GM10248 (cell line): ENCODE measurements at regions of chr3 and their contacts with region 1.

Region 1: DNA sequence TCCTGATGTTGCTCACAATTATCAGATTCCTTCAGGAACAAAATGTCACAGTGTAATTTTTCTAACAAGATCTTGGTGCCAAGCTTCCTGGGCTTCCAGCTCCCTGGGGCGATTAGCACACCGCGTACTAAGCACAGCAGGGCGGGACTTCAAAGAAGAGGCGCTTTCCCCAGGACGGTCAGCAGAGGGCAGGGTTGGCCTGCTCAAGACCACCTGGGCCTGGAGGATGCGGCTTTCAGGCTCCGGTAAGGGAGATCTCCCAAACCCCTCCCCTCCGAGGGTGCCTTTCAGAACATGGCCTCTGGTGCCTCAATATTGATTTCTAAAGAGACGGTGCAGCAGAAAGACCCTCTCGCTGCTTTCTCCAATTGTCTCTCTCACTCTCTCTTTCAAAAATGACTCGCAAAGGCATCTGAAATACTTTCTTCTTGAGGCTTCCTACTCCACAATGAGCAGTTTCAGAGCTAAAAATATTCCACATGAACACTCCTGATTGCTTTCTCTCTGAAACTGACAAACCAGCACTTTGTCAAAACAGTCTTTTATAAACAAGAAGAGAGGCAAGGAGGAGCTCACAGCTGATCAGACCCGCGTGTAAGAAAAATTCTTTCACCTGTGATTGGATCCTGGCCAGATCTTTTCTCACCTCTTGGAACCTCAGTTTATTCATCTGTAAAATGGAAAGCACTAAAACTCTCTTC is 154.0 kb downstream of the ADAMTS9 start:
- DNase-seq: peak; percentile 62
- CTCF ChIP-seq: peak; percentile 85

Region 2: GRCh38 chr3:64518950-64519349 is 14.8 kb before region 1 on chr3:
- CTCF ChIA-PET with region 1: interaction called, 26 read pairs
- POLR2A ChIA-PET with region 1: no interaction called
- DNase-seq: no peak
- CTCF ChIP-seq: no peak

Region 3: DNA sequence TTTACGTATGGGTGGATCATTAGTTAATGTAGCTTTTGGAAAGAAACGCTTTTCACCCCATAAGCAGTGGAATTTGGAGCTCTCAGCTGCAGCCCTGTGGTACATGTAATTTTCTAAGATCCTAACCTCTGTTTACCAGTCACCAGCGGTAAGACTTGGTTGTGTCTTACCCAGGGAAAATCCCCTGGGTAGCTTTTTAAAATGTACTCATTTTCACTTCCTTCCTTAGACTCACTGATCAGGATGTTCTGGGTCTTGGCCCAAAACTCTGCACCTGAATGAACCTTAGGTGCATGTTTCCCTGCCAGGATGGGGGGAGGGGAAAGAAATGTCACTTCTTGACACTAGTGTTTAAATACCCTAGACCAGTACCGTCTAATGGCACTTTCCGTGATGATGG is 899.7 kb after region 1 on chr3:
- CTCF ChIA-PET with region 1: interaction called, 12 read pairs
- POLR2A ChIA-PET with region 1: no interaction called
- DNase-seq: no peak
- CTCF ChIP-seq: no peak

Region 4: DNA sequence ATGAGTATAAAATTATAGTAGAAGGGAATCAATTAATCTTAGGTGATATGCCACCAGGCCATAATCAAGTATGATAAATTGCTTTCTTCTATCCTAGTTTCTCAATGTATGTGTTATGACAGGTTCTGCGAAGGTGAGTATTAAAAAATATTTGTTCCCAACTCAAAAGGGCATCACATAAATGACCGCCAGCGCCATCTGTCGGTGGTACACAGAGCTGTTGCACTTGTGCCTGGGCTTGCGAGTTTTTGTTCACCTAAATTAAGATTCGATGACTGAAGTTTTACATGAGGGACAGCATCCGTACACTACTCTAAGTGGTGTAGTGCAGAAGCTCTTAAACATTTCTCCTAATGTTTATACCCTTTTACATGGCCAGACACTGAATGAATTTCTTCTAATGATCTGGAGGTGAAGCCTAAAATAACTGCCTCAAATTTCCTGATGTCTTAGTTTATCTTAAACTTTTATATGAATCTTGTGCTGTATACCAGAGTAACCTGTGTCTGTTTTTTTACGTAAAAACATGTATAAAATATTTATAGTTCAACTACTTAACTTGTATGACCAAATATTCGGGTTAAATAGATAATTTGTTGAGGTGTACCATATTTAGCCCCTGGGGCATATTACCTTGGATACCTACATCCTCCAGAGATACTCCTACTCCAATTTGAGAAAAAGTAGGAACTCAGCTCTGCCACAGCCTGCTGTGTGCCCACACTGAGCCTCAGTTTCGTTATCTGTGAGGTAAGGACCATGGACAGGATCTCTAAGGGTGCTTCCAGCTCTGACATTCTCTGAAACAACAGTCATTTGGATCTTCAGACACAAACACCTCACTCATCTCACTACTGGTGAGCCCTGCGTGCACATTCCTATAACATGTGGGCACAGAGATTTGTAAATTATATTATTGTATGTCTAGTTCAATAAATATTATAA is 1139.4 kb after region 1 on chr3:
- CTCF ChIA-PET with region 1: interaction called, 16 read pairs
- POLR2A ChIA-PET with region 1: no interaction called
- DNase-seq: peak; percentile 13
- CTCF ChIP-seq: peak; percentile 56